Left cardiac atrium (tissue), 4 donors: ENCODE measurements at regions of chr5 and their contacts with region 1.

Region 1: GRCh38 chr5:160021831-160022446 is 13.0 kb downstream of the TTC1 start:
- DNase-seq: no peak
- ATAC-seq: peak; percentile 83 to 93

Region 2: DNA sequence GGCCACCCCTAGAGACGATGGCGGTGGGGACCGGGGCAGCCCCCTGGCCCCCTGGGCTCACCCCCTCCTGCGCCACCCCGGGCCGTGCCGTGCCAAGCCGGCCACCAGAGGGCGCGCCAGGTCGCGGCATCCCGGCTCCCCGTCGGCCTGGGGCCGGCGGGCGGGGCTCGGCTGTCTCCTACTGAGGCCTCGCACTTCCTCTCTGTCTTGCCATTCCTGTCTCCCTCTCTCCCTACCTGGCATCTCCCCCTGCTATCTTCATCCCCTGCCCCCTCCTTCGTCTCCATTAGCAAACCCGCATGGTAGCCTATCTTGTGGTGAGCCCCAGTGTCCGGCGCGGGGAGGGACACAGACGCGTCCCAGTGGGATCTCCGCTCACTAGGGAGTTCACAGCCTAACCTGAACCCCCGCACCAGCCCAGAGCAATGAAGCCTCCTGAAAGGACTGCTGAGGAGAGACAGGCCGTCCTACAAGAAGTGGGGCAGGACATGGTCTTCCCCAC is 177.5 kb after region 1 on chr5:
- intact Hi-C with region 1: loop called (anchors 5 to 10 kb)
- DNase-seq: peak; percentile 78
- ATAC-seq: peak; percentile 96 to 97

Region 3: DNA sequence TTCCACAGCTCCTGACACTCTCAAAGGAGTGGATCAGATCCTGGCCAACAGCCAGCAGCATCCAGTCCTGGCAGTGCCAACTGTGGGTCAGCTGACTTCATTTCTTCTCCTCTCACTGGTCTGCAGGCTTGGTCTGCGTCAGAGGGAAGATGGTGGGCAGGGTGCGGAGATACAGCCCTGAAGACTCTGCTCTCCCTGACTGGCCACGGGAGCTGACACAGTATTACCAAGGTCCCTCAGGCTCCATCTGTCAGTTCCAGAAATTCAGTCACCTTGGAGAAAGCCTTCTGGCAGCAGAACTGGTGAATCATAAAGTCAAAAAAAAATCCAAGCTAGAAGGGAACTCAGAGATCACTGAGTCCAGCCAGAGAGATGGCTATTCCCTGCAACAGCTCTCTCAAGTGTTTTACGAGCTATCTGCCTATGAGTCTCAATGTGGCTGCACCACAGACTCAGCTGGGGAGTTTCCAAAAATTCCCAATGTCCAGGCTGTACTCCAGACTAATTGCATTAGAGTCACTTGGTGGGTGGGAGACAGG is 320.5 kb after region 1 on chr5:
- intact Hi-C with region 1: loop called in 1 of 2 experiments (anchors 2 kb)
- DNase-seq: no peak
- ATAC-seq: peak; percentile 36 to 67

Region 4: GRCh38 chr5:160390787-160391696 is 369.1 kb after region 1 on chr5:
- intact Hi-C with region 1: loop called in 1 of 2 experiments (anchors 2 kb)
- DNase-seq: no peak
- ATAC-seq: no peak